Endothelial cell of umbilical vein (primary cell): ENCODE measurements at regions of chr1 and their contacts with region 1.

Region 1: GRCh38 chr1:115138968-115139367 is 49.7 kb upstream of the TSPAN2 start:
- DNase-seq: peak; percentile 79
- H3K4me3 ChIP-seq: no peak overlapping the region
- H3K27ac ChIP-seq: no peak overlapping the region
- H3K4me1 ChIP-seq: no peaks in the 10 kb centered on the region
- H3K27me3 ChIP-seq: peaks cover 0 to 2% of the 10 kb centered on the region in 2 experiments
- CTCF ChIP-seq: peak; percentile 90 to 92
- POLR2A ChIP-seq: no peak

Region 2: DNA sequence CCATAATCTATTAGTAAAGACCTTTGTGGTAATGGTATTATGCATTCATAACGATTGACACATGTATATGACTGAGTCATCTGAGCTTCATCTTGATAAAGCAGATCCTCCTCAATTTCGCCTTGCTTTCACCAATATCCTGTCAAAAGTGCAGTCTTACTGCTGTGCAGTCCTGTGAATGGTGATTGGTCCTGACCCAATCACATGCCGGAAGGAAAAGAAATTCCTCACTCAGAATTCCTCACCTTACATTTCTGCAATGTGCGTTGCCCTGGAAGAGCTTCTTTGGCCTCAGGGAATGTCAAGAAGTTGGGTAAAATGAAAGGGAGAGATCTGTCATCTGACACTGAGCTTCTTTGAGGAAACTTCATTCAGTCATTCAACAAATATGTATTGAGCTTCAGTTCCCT is 71.3 kb after region 1 on chr1:
- CTCF ChIA-PET with region 1: no interaction called
- POLR2A ChIA-PET with region 1: no interaction called
- dilution Hi-C with region 1: no loop called
- intact Hi-C with region 1: no loop called
- DNase-seq: no peak
- H3K4me3 ChIP-seq: no peak overlapping the region
- H3K27ac ChIP-seq: no peak overlapping the region
- H3K4me1 ChIP-seq: no peaks in the 10 kb centered on the region
- H3K27me3 ChIP-seq: no peaks in the 10 kb centered on the region
- CTCF ChIP-seq: no peak
- POLR2A ChIP-seq: no peak

Region 3: DNA sequence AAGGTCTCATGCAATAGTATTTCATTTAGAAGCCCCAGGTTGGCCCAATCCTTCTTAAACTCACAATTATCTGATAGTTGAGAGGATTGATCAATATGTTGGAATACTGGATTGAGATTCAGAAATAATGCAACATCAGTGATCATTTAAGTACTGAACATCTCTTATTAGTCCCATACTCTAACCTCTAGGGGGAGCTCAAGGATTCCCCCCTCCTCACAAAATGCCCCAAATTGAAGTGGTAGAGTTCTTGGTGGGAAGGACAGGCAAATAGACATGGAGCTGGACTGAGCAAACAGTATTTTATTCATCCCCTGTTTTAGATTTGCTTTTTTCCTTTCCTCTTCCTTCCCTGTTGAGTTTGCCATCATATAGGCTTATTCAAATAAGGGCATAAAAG is 136.2 kb after region 1 on chr1:
- CTCF ChIA-PET with region 1: interaction called, 10 read pairs
- POLR2A ChIA-PET with region 1: no interaction called
- dilution Hi-C with region 1: no loop called
- intact Hi-C with region 1: loop called (anchors 1 kb)
- DNase-seq: peak; percentile 14
- H3K4me3 ChIP-seq: no peak overlapping the region
- H3K27ac ChIP-seq: no peak overlapping the region
- H3K4me1 ChIP-seq: no peaks in the 10 kb centered on the region
- H3K27me3 ChIP-seq: no peaks in the 10 kb centered on the region
- CTCF ChIP-seq: peak; percentile 24 to 40
- POLR2A ChIP-seq: no peak

Region 4: DNA sequence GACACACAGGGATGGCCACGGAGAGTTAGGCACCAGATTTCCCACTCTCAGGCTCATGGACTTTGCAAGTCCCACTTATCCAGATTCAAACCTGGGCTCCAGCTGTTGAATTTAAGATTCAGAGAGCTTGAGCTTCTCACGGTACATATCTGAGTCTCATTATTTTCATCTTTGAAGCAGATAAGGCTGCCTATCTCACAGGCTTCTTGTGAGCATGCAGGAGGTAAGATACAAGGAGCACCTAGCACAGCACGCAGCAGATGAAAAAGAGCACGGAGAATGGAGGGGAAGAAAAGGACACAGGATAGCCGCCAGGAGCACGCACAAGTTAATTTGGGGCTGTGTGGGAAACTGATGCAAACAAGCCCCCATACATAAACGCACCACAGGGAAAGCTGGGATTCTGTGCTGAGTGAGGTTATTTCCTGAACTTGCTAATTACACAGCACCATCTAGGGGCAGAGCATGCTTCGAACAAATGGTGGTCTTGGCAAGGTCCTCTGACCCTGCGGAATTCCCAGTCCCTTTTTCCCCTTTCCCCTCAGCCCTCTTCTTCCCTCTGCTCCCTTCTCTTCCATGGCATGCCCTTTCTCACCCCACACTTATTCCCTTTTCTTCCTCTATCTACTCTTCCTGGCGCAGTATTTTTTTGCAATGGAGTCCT is 368.1 kb after region 1 on chr1:
- CTCF ChIA-PET with region 1: interaction called, 8 read pairs
- POLR2A ChIA-PET with region 1: no interaction called
- dilution Hi-C with region 1: no loop called
- intact Hi-C with region 1: loop called (anchors 1 kb)
- DNase-seq: peak; percentile 13
- H3K4me3 ChIP-seq: no peak overlapping the region
- H3K27ac ChIP-seq: no peak overlapping the region
- H3K4me1 ChIP-seq: no peaks in the 10 kb centered on the region
- H3K27me3 ChIP-seq: peaks cover 2 to 5% of the 10 kb centered on the region in 2 experiments
- CTCF ChIP-seq: peak; percentile 19 to 45
- POLR2A ChIP-seq: no peak